Aorta (tissue), 5 donors: ENCODE measurements at regions of chr12 and their contacts with region 1.

Region 1: GRCh38 chr12:59672273-59672672 is 76.4 kb downstream of the SLC16A7 start:
- DNase-seq: no peak
- ATAC-seq: no peak
- H3K4me3 ChIP-seq: no peak overlapping the region
- H3K27ac ChIP-seq: no peak overlapping the region
- H3K4me1 ChIP-seq: no peaks in the 10 kb centered on the region
- H3K27me3 ChIP-seq: no peaks in the 10 kb centered on the region

Region 2: DNA sequence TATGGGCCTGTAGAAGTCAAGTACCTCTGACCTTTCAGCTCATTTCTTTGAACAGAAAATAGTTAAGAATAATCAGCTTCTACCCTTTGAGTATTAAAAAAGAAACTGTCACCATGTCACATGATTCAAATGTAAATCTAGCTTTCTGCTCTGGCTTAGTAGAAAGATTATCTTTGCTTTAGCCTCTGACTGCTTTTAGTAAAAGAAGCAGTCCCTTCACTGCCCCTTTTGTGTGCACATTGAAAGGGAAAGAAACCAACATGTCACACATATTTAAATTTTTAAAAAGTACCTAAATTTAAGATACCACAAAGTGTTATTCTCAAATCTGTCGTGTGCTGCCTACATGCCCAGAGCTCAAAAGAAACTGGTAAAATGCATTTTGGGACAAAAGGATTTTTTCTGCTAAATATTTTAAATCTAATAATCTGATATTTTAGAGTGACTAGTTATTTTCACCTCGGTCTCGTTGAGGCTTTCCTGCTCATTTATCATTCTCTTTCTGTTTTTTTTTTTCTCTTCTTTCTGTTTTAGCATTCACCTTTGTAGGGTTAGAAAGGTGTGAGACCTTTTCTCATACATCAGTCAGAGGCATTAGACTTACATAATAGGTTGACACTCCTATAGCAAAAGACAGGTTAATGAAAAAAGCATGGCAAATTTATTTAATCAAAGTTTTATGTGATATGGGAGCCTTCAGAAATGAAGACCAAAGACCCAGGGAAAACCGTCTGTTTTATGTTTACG is 35.2 kb before region 1 on chr12:
- intact Hi-C with region 1: loop called in 1 of 2 experiments (anchors 5 kb)
- DNase-seq: no peak
- ATAC-seq: no peak
- H3K4me3 ChIP-seq: no peak overlapping the region
- H3K27ac ChIP-seq: no peak overlapping the region
- H3K4me1 ChIP-seq: peaks cover 2 to 4% of the 10 kb centered on the region in 2 donors
- H3K27me3 ChIP-seq: no peaks in the 10 kb centered on the region